ENCODE measurements at regions of chr7 and their contacts with region 1.

Region 1: GRCh38 chr7:85023045-85023712 is 163.7 kb downstream of the SEMA3D start:
- DNase-seq: peak; percentile 58
- ATAC-seq: no peak
- H3K4me3 ChIP-seq: no peak overlapping the region
- H3K27ac ChIP-seq: no peak overlapping the region
- H3K4me1 ChIP-seq: no peaks in the 10 kb centered on the region
- H3K27me3 ChIP-seq: no peaks in the 10 kb centered on the region
- CTCF ChIP-seq: peak; percentile 78
- POLR2A ChIP-seq: no peak
- RAD21 ChIP-seq: peak; percentile 91

Region 2: GRCh38 chr7:83410989-83411591 is 1612.1 kb before region 1 on chr7:
- CTCF ChIA-PET with region 1: no interaction called
- POLR2A ChIA-PET with region 1: no interaction called
- dilution Hi-C with region 1: no loop called
- in situ Hi-C with region 1: no loop called
- intact Hi-C with region 1: loop called (anchors 5 kb)
- DNase-seq: peak; percentile 61
- ATAC-seq: peak; percentile 77
- H3K4me3 ChIP-seq: no peak overlapping the region
- H3K27ac ChIP-seq: no peak overlapping the region
- H3K4me1 ChIP-seq: no peaks in the 10 kb centered on the region
- H3K27me3 ChIP-seq: peaks cover 2% of the 10 kb centered on the region; the same call in 1 of the 2 replicates
- CTCF ChIP-seq: peak; percentile 78
- POLR2A ChIP-seq: no peak
- RAD21 ChIP-seq: peak; percentile 78

Region 3: DNA sequence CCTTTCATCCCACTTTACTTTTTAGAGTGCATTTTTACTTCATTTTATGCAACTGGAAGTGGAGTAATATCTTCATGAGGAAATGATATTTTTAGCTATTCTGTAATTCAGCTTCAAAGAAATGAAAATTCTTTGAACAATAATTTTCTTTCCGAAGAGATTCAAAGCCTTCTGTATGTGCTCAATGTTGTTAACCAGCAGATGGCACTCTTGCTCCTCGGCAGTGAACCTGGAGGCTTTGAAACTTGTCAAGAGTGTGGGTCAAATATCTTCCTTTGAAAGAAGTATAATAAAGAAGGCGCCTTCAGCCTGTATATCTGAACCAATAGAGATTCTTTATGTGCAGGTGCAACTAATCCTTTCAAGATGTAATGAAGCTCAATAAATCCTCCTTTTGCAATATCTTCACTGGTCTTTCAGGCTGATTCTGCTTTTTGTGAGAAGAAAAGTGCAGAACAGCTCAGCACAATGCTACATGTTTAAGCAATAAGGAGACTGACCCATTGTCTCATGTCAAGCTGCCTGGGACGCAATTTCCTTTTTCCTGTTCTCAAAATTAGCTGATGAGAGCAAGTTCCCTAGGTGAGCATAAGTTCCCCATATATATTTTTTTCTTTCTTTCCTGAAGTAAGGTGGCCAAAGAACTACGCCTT is 1087.0 kb before region 1 on chr7:
- CTCF ChIA-PET with region 1: interaction called, 55 read pairs
- POLR2A ChIA-PET with region 1: interaction called, 3 read pairs
- dilution Hi-C with region 1: no loop called
- in situ Hi-C with region 1: loop called (anchors 5 kb)
- intact Hi-C with region 1: loop called (anchors 1 kb)
- DNase-seq: peak; percentile 81
- ATAC-seq: peak; percentile 95
- H3K4me3 ChIP-seq: no peak overlapping the region
- H3K27ac ChIP-seq: no peak overlapping the region
- H3K4me1 ChIP-seq: no peaks in the 10 kb centered on the region
- H3K27me3 ChIP-seq: no peaks in the 10 kb centered on the region
- CTCF ChIP-seq: peak; percentile 93
- POLR2A ChIP-seq: no peak
- RAD21 ChIP-seq: peak; percentile 95

Region 4: DNA sequence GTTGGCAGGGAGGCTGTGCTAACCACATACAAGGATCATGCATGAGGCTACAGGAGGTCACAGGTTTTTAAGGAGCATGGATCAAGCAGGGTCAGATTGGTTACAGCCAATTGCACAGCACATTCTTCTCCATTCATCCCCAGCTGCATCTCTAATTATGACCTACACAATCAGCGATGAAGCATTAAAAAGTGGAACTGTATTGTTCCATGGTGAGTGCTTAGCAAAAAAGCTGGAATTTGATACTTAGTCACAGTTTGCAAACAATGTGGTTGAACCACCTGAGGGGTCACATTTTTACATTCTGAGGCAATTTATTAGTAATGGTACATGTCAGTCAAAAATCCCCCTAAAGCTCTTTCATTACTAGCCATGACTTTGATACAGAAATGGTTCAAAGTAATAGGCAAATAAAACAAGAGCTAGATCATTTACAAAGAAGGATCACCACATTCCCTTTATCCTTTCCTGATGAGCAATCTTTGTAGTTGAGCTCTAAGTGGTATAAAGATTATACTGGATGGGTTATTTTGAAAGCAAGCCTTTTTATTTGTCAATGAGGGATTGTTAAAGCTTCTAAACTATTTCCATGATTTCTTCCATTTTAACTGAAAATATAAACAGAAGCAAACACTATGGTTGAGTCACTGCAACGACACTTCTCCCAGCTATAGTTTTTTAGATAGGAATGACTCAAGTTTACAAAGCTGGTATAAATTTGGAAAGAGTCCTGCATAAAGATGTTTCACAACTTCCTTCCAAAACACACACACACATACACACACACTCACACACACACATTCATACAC is 610.8 kb before region 1 on chr7:
- CTCF ChIA-PET with region 1: no interaction called
- POLR2A ChIA-PET with region 1: no interaction called
- dilution Hi-C with region 1: no loop called
- in situ Hi-C with region 1: no loop called
- intact Hi-C with region 1: loop called (anchors 5 kb)
- DNase-seq: peak; percentile 99
- ATAC-seq: peak; percentile 87
- H3K4me3 ChIP-seq: peak overlapping the region; percentile 1; the same call in 1 of the 2 replicates
- H3K27ac ChIP-seq: peak overlapping the region; percentile 76
- H3K4me1 ChIP-seq: peaks cover 7% of the 10 kb centered on the region
- H3K27me3 ChIP-seq: no peaks in the 10 kb centered on the region
- CTCF ChIP-seq: no peak
- POLR2A ChIP-seq: no peak
- RAD21 ChIP-seq: no peak

Region 5: DNA sequence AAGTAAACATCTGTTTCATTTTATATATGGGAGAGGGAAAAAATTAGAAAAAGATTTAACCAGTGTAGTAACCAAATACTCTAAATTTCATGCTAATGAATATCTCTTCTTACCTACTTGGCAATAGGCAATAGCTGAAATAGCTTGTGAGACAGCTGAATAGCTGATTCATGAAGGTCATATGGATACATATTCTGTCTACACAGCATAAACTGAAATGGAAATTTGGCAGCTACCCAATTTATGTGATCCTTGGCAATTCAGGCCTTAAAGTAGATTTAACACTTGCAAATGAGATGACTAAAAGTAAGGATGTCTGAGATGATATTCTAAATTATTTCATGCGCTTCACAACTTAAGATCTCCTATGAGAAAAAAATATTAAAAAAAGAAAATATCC is 567.4 kb before region 1 on chr7:
- CTCF ChIA-PET with region 1: no interaction called
- POLR2A ChIA-PET with region 1: no interaction called
- dilution Hi-C with region 1: no loop called
- in situ Hi-C with region 1: loop called (anchors 25 kb)
- intact Hi-C with region 1: loop called (anchors 5 kb)
- DNase-seq: peak; percentile 30
- ATAC-seq: no peak
- H3K4me3 ChIP-seq: no peak overlapping the region
- H3K27ac ChIP-seq: no peak overlapping the region
- H3K4me1 ChIP-seq: no peaks in the 10 kb centered on the region
- H3K27me3 ChIP-seq: no peaks in the 10 kb centered on the region
- CTCF ChIP-seq: no peak
- POLR2A ChIP-seq: no peak
- RAD21 ChIP-seq: no peak

Region 6: DNA sequence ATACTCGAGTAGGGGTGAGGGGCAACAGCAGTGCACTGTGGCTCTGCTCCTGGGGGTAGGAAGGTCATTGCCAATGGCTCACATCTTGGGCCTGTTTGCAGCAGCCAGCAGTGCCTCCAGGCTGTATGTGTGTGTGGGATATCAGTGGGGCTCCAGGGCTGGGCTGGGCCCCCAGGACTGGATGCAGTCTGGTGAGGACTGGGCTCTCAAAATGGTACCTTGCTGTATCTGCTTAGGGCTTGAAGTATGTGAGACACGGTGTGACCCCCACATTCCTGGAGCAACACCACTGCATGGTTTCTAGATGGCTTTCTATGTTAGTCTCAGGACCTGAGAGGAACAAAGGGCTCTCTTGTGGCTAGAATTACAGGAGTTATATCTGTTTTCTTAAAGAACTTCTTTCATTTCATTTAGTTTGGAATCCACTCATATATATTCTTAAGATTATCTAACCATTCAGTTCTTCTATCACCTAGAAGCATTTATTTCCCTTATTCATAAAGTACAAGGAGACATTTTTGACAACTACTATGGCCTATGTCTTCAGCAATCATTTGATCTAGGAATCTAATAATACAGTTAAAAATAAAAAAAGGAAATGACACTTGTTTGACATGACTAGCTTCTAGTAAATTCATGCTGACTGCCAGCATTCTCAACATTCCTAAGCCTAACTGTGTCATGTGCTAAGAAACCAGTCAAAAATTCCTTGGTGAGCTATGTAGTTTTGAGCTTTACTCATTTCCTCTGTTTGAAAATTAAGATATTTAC is 385.4 kb before region 1 on chr7:
- CTCF ChIA-PET with region 1: no interaction called
- POLR2A ChIA-PET with region 1: no interaction called
- dilution Hi-C with region 1: no loop called
- in situ Hi-C with region 1: loop called (anchors 25 kb)
- intact Hi-C with region 1: loop called (anchors 10 kb)
- DNase-seq: peak; percentile 90
- ATAC-seq: peak; percentile 94
- H3K4me3 ChIP-seq: no peak overlapping the region
- H3K27ac ChIP-seq: peak overlapping the region; percentile 94
- H3K4me1 ChIP-seq: peaks cover 9% of the 10 kb centered on the region
- H3K27me3 ChIP-seq: no peaks in the 10 kb centered on the region
- CTCF ChIP-seq: no peak
- POLR2A ChIP-seq: no peak
- RAD21 ChIP-seq: no peak

Measured in IMR-90 (cell line).